ENCODE measurements at regions of chr17 and their contacts with region 1.

Region 1: DNA sequence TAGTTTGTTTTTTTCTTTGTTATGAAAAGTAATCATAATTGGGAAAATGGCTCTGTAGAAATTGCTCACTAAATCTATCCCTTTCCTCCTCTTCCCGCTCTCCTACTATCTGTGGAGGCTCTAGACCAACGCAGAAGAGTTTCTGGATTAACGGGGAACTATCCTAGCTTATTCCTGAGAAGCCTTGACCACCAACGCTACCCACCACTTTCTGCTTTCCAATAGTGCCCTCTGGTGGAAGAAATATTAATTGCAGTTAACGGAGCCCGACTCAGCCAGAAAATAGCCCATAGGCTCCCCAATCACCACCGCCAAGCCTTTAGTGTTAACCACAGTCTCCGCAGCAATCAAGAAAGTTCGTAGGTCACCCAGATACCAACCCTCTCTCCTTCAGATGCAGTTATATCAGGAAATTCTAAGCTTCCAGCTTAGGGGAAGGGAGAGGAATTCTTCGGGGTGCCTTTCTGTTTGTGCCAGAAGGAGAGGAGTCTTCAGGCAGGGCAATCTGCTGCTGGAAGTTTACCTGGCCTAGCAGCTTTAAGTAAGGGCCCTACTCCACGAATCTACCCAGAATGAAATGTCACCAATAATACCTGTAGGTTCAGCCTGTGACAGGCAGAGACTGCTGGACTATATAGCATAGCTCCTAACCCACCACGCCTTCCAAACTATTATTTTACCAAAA is 23.0 kb upstream of the NSRP1 start:
- H3K4me3 Mint-ChIP-seq: no peak overlapping the region
- H3K27ac Mint-ChIP-seq: no peak overlapping the region
- H3K4me1 Mint-ChIP-seq: peaks cover 9% of the 10 kb centered on the region
- H3K27me3 Mint-ChIP-seq: no peaks in the 10 kb centered on the region

Region 2: DNA sequence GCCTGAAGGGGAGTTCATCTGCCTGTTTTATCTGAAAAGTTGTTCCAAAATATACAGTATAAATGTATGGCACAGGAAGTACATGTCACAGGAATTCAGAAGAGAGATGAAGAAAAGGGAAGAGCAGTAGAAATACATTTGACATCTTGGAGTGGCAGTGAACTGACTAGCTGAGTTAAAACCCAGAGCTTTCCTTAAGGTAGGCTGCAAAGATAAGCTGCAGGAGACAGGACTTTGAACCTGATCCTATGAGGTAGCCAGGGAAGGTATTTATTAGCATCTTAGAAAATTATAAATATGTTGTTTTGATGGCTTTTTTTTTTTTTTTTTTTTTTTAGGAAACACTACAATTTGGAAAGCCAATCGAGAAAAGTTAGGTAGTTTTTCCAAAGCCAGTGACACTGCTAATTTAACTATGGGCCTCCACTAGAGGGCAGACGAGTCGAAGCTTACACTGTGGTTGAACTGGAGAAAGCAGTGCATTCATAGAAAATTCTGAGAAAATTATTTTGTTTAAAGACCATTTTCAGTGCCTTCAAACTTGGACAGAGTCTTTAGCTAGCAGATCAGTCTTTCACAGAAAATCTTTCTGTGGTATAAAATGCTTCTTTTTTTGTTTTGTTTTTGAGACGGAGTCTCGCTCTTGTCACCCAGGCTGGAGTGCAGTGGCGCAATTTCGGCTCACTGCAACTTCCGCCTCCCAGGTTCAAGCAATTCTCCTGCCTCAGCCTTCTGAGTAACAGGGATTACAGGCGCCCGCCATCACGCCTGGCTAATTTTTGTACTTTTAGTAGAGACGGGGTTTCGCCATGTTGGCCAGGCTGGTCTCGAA is 285.9 kb before region 1 on chr17:
- intact Hi-C with region 1: loop called (anchors 10 kb)
- H3K4me3 Mint-ChIP-seq: peak overlapping the region; percentile 73
- H3K27ac Mint-ChIP-seq: peak overlapping the region; percentile 85
- H3K4me1 Mint-ChIP-seq: peaks cover 13% of the 10 kb centered on the region
- H3K27me3 Mint-ChIP-seq: no peaks in the 10 kb centered on the region

Region 3: DNA sequence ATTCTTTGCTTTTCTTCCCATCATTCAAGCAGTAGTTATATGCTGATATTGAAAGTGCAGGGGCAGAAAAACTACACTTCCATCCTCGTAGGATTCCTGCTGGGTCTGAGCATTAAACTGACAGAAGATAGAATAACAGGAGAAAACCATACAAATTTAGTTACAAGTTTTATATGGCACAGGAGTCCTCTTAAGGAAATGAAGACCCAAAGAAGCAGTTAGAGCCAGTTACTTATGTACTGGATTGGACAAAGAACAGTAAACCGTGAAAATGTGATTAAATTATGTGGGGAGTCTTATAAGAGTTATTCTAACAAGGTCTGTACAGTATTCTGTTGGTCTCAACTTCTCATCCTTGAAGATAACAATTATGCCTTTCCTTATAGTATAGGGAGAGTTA is 58.2 kb before region 1 on chr17:
- intact Hi-C with region 1: no loop called
- H3K4me3 Mint-ChIP-seq: no peak overlapping the region
- H3K27ac Mint-ChIP-seq: no peak overlapping the region
- H3K4me1 Mint-ChIP-seq: peaks cover 8% of the 10 kb centered on the region
- H3K27me3 Mint-ChIP-seq: no peaks in the 10 kb centered on the region

Region 4: DNA sequence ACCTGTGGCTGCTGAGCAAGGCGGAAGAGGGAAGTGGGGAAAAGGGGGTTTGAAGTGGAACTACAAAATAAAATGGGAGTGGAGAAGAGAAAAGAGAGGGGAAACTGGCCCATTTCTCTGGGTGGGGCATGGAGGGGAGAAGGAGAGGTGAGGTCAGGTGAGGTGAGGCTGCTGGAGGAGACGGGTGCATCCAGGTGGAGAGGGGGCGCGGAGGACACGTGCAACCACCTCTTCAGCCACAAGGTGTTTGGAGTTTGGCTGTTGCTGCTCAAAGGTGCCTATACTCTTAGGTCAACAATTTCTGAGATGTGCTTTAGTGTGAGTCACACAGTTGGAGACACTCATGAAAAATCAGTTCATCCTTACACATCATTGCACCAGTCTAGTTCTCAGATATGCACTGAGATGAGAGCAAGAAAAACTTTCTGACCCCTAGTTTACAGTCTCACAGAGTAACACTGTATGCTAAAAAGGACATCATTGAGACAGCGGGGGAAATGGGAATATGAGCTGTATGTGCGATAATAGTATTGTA is 137.1 kb after region 1 on chr17:
- intact Hi-C with region 1: no loop called
- H3K4me3 Mint-ChIP-seq: peak overlapping the region; percentile 37
- H3K27ac Mint-ChIP-seq: peak overlapping the region; percentile 75
- H3K4me1 Mint-ChIP-seq: peaks cover 34% of the 10 kb centered on the region
- H3K27me3 Mint-ChIP-seq: peaks cover 37% of the 10 kb centered on the region

Measured in dendritic cell treated with granulocyte-macrophage colony-stimulating factor and Interleukin-4, amounts not matched to agents 40 ng/mL and 50 ng/mL, for 4 days (primary cell).